WTC11 (cell line): ENCODE measurements at regions of chr17 and their contacts with region 1.

Region 1: GRCh38 chr17:43483674-43484372 is at the start of gene DHX8:
- DNase-seq: peak; percentile 97
- ATAC-seq: peak; percentile 96
- H3K4me3 Mint-ChIP-seq: peak within 1 kb of the TSS; percentile 100
- H3K27ac Mint-ChIP-seq: peak within 1 kb of the TSS; percentile 100
- H3K4me1 Mint-ChIP-seq: peaks cover 30% of the 10 kb centered on the region
- H3K27me3 Mint-ChIP-seq: no peaks in the 10 kb centered on the region
- CTCF ChIP-seq: peak; percentile 98
- total RNA-seq, gene DHX8: 47.9 to 58.5 TPM (median 58.3 TPM) in 3 replicates

Region 2: GRCh38 chr17:43334738-43335402 is 149.0 kb before region 1 on chr17:
- CTCF ChIA-PET with region 1: interaction called, 14 read pairs
- POLR2A ChIA-PET with region 1: no interaction called
- DNase-seq: no peak
- ATAC-seq: no peak
- H3K4me3 Mint-ChIP-seq: no peak overlapping the region
- H3K27ac Mint-ChIP-seq: peak overlapping the region; percentile 54; the same call in 1 of the 2 replicates
- H3K4me1 Mint-ChIP-seq: peaks cover 23% of the 10 kb centered on the region
- H3K27me3 Mint-ChIP-seq: no peaks in the 10 kb centered on the region
- CTCF ChIP-seq: no peak

Region 3: GRCh38 chr17:43367737-43368242 is 116.0 kb before region 1 on chr17:
- CTCF ChIA-PET with region 1: interaction called, 38 read pairs
- POLR2A ChIA-PET with region 1: interaction called, 16 read pairs
- DNase-seq: no peak
- ATAC-seq: peak; percentile 14
- H3K4me3 Mint-ChIP-seq: peak overlapping the region; percentile 74
- H3K27ac Mint-ChIP-seq: peak overlapping the region; percentile 100
- H3K4me1 Mint-ChIP-seq: peaks cover 39% of the 10 kb centered on the region
- H3K27me3 Mint-ChIP-seq: no peaks in the 10 kb centered on the region
- CTCF ChIP-seq: no peak

Region 4: DNA sequence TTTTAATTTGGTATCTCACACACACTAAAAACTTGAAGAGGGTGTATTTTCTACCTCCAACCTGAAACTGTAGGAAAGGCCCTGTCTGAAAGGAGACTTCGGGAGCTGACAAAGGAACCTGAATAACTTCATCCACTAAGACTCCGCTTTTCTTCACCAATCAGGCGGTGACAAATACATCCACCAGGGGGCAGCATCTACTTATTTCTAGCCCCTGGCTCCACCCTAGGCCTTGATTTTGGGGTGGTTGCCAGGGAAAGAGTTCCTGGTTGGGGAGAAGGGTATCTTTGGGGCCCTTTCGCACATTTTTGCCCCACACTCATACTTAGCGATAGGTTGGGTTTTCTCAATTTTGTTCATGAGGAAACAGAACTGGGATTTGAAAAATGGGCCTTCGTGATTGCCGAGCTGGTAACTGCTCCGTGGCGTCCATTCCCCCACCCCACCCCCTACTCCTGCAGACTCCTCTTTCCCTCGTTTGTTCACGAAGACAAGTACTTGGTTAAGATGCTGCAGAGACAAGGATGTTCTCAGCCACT is 89.8 kb before region 1 on chr17:
- CTCF ChIA-PET with region 1: interaction called, 178 read pairs
- POLR2A ChIA-PET with region 1: interaction called, 9 read pairs
- DNase-seq: peak; percentile 94
- ATAC-seq: peak; percentile 74
- H3K4me3 Mint-ChIP-seq: no peak overlapping the region
- H3K27ac Mint-ChIP-seq: peak overlapping the region; percentile 87; the same call in 1 of the 2 replicates
- H3K4me1 Mint-ChIP-seq: peaks cover 11% of the 10 kb centered on the region; the same call in 1 of the 2 replicates
- H3K27me3 Mint-ChIP-seq: no peaks in the 10 kb centered on the region
- CTCF ChIP-seq: peak; percentile 83

Region 5: GRCh38 chr17:43418441-43419374 is 65.1 kb before region 1 on chr17:
- CTCF ChIA-PET with region 1: interaction called, 13 read pairs
- POLR2A ChIA-PET with region 1: no interaction called
- DNase-seq: no peak
- ATAC-seq: peak; percentile 48; the same call in 1 of the 2 replicates
- H3K4me3 Mint-ChIP-seq: no peak overlapping the region
- H3K27ac Mint-ChIP-seq: no peak overlapping the region
- H3K4me1 Mint-ChIP-seq: 0 out of 2 replicates have a peak, but pooled peaks cover 3% of the 10 kb centered on the region
- H3K27me3 Mint-ChIP-seq: peaks cover 3% of the 10 kb centered on the region; the same call in 1 of the 2 replicates
- CTCF ChIP-seq: no peak

Region 6: GRCh38 chr17:43456661-43457361 is 27.0 kb before region 1 on chr17:
- CTCF ChIA-PET with region 1: interaction called, 16 read pairs
- POLR2A ChIA-PET with region 1: no interaction called
- DNase-seq: no peak
- ATAC-seq: no peak
- H3K4me3 Mint-ChIP-seq: no peak overlapping the region
- H3K27ac Mint-ChIP-seq: no peak overlapping the region
- H3K4me1 Mint-ChIP-seq: peaks cover 6% of the 10 kb centered on the region
- H3K27me3 Mint-ChIP-seq: no peaks in the 10 kb centered on the region
- CTCF ChIP-seq: no peak

Region 7: GRCh38 chr17:43562679-43563599 is 79.1 kb after region 1 on chr17:
- CTCF ChIA-PET with region 1: interaction called, 11 read pairs
- POLR2A ChIA-PET with region 1: no interaction called
- DNase-seq: no peak
- ATAC-seq: peak; percentile 67
- H3K4me3 Mint-ChIP-seq: peak overlapping the region; percentile 53
- H3K27ac Mint-ChIP-seq: no peak overlapping the region
- H3K4me1 Mint-ChIP-seq: peaks cover 36% of the 10 kb centered on the region
- H3K27me3 Mint-ChIP-seq: peaks cover 7% of the 10 kb centered on the region
- CTCF ChIP-seq: no peak

Region 8: GRCh38 chr17:43907425-43907981 is 423.7 kb after region 1 on chr17 and contains the start of gene MPP2:
- CTCF ChIA-PET with region 1: no interaction called
- POLR2A ChIA-PET with region 1: no interaction called
- DNase-seq: peak; percentile 88
- ATAC-seq: peak; percentile 16
- H3K4me3 Mint-ChIP-seq: peak within 1 kb of the TSS; percentile 90
- H3K27ac Mint-ChIP-seq: no peak within 1 kb of the TSS
- H3K4me1 Mint-ChIP-seq: peaks cover 26% of the 10 kb centered on the region
- H3K27me3 Mint-ChIP-seq: peaks cover 49% of the 10 kb centered on the region
- CTCF ChIP-seq: no peak
- total RNA-seq, gene MPP2: 29.3 to 31.4 TPM (median 29.9 TPM) in 3 replicates